ENCODE measurements at regions of chr2 and their contacts with region 1.

Region 1: GRCh38 chr2:70142590-70143313 is 48.1 kb downstream of the C2orf42 start:
- DNase-seq: peak; percentile 98 to 99
- ATAC-seq: peak; percentile 74 to 75
- H3K4me3 ChIP-seq: peak overlapping the region; percentile 43 to 70 (median 62)
- H3K27ac ChIP-seq: peak overlapping the region; percentile 97 to 100 (median 98)
- H3K4me1 ChIP-seq: peaks cover 19 to 20% of the 10 kb centered on the region in 2 donors
- H3K27me3 ChIP-seq: no peaks in the 10 kb centered on the region
- CTCF ChIP-seq: peak; percentile 96 to 100 (median 99)
- POLR2A ChIP-seq: peak; percentile 27 to 71

Region 2: DNA sequence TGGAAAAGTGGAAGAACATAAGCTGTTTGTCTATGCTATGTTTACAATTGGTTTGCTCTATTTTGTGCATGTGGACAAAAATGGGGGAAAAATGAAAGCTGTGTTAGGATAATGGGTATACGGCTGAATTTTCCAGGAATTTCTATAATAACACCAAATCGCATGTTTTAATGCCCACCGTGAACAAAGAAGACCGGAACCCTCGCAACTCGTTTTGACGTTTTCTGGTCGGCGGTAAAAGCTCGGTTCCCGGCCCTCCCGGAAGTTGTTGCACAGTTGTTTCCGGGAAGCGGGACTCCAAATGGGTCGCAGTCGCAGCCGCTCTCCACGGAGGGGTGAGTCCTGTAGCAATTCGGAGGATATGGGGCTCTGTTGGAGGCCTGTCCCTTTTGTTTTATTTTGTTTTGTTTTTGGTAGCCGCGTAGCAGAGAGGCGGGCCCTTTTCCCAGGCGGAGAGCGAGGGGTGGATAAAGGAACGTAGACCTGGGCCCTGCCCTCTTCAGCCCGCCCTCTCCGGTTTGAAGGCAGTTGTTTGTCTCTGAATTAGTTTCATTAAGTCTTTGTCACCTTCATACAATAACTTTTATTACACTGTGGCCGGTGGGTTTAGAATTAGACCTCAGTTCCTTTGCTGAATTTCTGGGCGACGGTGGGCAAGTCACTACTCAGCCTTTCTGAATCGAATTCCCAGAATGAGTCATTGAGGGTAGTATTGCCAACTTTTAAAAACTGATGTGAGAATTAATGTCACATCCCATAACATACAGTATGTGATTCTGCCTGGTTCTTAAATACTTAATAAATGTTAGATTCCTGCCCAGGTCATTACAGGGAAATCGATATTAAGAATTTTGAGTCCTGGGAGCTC is 248.8 kb before region 1 on chr2 and contains the start of gene SNRNP27:
- in situ Hi-C with region 1: no loop called
- intact Hi-C with region 1: loop called (anchors 5 kb)
- DNase-seq: peak; percentile 61 to 71
- ATAC-seq: peak; percentile 89 to 92
- H3K4me3 ChIP-seq: peak within 1 kb of the TSS; percentile 70 to 85 (median 79)
- H3K27ac ChIP-seq: peak within 1 kb of the TSS; percentile 85 to 88 (median 87)
- H3K4me1 ChIP-seq: peaks cover 15 to 19% of the 10 kb centered on the region in 2 donors
- H3K27me3 ChIP-seq: no peaks in the 10 kb centered on the region
- CTCF ChIP-seq: no peak
- POLR2A ChIP-seq: peak in 1 of 2 donors; percentile 59
- total RNA-seq, gene SNRNP27: 109 to 161 (median 130) TPM

Region 3: DNA sequence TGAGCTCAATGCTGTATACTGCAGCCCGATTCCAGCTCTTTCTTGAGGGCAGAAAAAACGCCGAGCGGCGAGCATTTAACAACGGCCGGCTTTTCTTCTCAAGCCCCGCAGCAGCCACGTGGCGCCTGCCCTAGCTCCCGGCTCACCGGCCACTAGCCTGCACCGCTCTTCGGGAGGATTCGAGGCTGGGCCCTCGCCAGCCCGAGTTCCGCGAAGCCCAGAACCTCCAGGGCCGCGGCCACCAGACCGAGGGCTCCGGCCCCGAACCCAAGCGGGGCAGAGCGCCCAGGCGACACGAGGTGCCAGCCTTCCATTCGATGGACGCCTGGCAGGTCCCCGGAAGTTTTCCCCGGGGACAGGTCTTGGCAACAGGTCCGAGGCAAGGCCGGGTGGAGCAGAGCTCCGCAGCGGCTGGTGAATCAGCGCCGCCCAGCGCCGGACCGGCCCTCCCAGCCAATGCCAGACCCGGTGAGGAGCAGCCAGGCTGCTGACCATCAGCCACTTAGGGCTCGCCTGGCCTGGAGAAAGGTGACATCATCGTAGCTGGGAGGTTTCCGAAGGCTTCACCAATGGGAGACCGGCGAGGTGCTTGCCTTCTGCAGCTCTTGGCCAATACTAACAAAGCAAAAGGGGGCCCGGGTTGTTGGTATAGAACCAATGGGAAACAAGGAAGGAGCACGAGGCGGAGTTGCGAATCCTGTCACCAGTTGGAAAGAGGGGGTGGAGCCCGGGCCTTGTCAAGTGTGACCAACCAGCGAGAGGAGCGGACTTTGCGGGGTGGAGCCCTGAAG is 228.4 kb before region 1 on chr2:
- in situ Hi-C with region 1: loop called (anchors 5 kb)
- intact Hi-C with region 1: loop called (anchors 1 kb)
- DNase-seq: peak; percentile 100
- ATAC-seq: peak; percentile 89 to 92
- H3K4me3 ChIP-seq: peak overlapping the region; percentile 77 to 87 (median 84)
- H3K27ac ChIP-seq: peak overlapping the region; percentile 96 to 99 (median 98)
- H3K4me1 ChIP-seq: peaks cover 30 to 45% of the 10 kb centered on the region in 2 donors
- H3K27me3 ChIP-seq: no peaks in the 10 kb centered on the region
- CTCF ChIP-seq: peak in 2 of 5 experiments; percentile 10 to 15
- POLR2A ChIP-seq: peak; percentile 72 to 80

Region 4: DNA sequence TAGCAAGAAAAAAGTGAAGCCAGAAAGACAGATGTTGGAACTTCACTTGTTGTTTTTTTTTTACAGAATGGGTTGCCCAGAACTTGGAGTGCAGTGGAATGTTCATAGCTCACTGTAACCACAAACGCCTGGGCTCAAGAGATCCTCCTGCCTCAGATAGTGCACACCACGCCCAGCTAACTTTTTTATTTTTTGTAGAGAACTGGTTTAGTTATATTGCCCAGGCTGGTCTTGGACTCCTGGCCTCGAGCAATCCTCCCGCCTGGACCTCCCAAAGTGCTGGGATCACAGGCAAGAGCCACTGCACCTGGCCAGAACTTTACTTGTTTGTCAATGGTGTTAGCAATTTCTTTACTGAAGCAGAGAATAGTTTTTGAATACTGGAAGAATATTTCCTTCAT is 169.4 kb before region 1 on chr2:
- in situ Hi-C with region 1: no loop called
- intact Hi-C with region 1: no loop called
- DNase-seq: no peak
- ATAC-seq: no peak
- H3K4me3 ChIP-seq: no peak overlapping the region
- H3K27ac ChIP-seq: no peak overlapping the region
- H3K4me1 ChIP-seq: no peaks in the 10 kb centered on the region
- H3K27me3 ChIP-seq: no peaks in the 10 kb centered on the region
- CTCF ChIP-seq: no peak
- POLR2A ChIP-seq: no peak

Region 5: GRCh38 chr2:70086838-70087701 is 55.7 kb before region 1 on chr2 and contains the start of gene PCBP1:
- in situ Hi-C with region 1: loop called in 1 of 4 experiments (anchors 5 kb)
- intact Hi-C with region 1: loop called (anchors 1 kb)
- DNase-seq: peak; percentile 92 to 94
- ATAC-seq: peak; percentile 71 to 75
- H3K4me3 ChIP-seq: peak within 1 kb of the TSS; percentile 91 to 95 (median 92)
- H3K27ac ChIP-seq: peak within 1 kb of the TSS; percentile 98 to 100 (median 98)
- H3K4me1 ChIP-seq: peaks cover 30 to 34% of the 10 kb centered on the region in 2 donors
- H3K27me3 ChIP-seq: no peaks in the 10 kb centered on the region
- CTCF ChIP-seq: no peak
- POLR2A ChIP-seq: peak; percentile 90 to 93
- total RNA-seq, gene PCBP1: 178 to 296 (median 262) TPM

Region 6: GRCh38 chr2:70190418-70191243 is 47.9 kb after region 1 on chr2 and contains the start of gene C2orf42:
- in situ Hi-C with region 1: no loop called
- intact Hi-C with region 1: loop called (anchors 2 kb)
- DNase-seq: peak; percentile 94 to 97
- ATAC-seq: peak; percentile 98
- H3K4me3 ChIP-seq: peak within 1 kb of the TSS; percentile 72 to 96 (median 88)
- H3K27ac ChIP-seq: peak within 1 kb of the TSS; percentile 92 to 99 (median 92)
- H3K4me1 ChIP-seq: peaks cover 4 to 6% of the 10 kb centered on the region in 2 donors
- H3K27me3 ChIP-seq: no peaks in the 10 kb centered on the region
- CTCF ChIP-seq: no peak
- POLR2A ChIP-seq: peak; percentile 91 to 97
- total RNA-seq, gene C2orf42: 6.3 to 10.1 (median 7.3) TPM

Region 7: GRCh38 chr2:70793450-70793849 is 650.7 kb after region 1 on chr2:
- in situ Hi-C with region 1: no loop called
- intact Hi-C with region 1: no loop called
- DNase-seq: no peak
- ATAC-seq: no peak
- H3K4me3 ChIP-seq: no peak overlapping the region
- H3K27ac ChIP-seq: no peak overlapping the region
- H3K4me1 ChIP-seq: peaks cover 5 to 6% of the 10 kb centered on the region in 2 donors
- H3K27me3 ChIP-seq: peaks cover 29 to 45% (median 29%) of the 10 kb centered on the region in 3 donors
- CTCF ChIP-seq: no peak
- POLR2A ChIP-seq: no peak